Ovary (tissue), 10 donors: ENCODE measurements at regions of chr20 and their contacts with region 1.

Region 1: DNA sequence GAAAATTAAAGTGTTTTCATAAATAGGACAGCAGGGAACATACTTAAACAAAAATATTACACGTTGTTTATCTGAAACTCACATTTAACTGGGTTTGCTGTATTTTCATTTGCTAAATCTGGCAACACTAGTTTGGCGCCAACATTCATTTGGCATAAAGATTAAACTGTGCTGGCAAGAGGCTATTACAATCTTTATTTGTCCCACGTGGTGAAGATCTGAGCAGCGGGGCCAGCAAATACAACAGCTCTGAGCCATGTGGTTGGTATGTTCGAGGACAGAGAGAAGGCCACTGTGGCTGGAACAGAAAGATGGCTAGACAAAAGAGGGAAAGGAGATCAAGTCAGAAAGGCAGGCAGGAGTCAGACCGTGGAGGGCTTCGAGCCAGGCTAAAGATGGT is 234.2 kb downstream of the ZNF217 start:
- DNase-seq: no peak
- H3K4me3 ChIP-seq: no peak overlapping the region
- H3K27ac ChIP-seq: no peak overlapping the region
- H3K4me1 ChIP-seq: no peaks in the 10 kb centered on the region
- H3K27me3 ChIP-seq: no peaks in the 10 kb centered on the region
- CTCF ChIP-seq: no peak
- EP300 ChIP-seq: no peak
- POLR2A ChIP-seq: no peak

Region 2: GRCh38 chr20:53021934-53022333 is 337.5 kb before region 1 on chr20:
- intact Hi-C with region 1: loop called in 1 of 4 experiments (anchors 5 kb)
- DNase-seq: no peak
- H3K4me3 ChIP-seq: no peak overlapping the region
- H3K27ac ChIP-seq: no peak overlapping the region
- H3K4me1 ChIP-seq: peaks cover 12% of the 10 kb centered on the region
- H3K27me3 ChIP-seq: no peaks in the 10 kb centered on the region
- CTCF ChIP-seq: no peak
- EP300 ChIP-seq: no peak
- POLR2A ChIP-seq: no peak

Region 3: GRCh38 chr20:53692413-53693067 is 333.1 kb after region 1 on chr20:
- intact Hi-C with region 1: no loop called
- DNase-seq: no peak
- H3K4me3 ChIP-seq: no peak overlapping the region
- H3K27ac ChIP-seq: no peak overlapping the region
- H3K4me1 ChIP-seq: no peaks in the 10 kb centered on the region
- H3K27me3 ChIP-seq: no peaks in the 10 kb centered on the region
- CTCF ChIP-seq: no peak
- EP300 ChIP-seq: no peak
- POLR2A ChIP-seq: no peak